ENCODE measurements at regions of chr14 and their contacts with region 1.

Region 1: GRCh38 chr14:75577729-75578101 is 705 bp upstream of the FLVCR2 start:
- DNase-seq: peak; percentile 83 to 93
- H3K4me3 ChIP-seq: peak overlapping the region; percentile 67
- H3K27ac ChIP-seq: peak overlapping the region; percentile 24
- H3K4me1 ChIP-seq: peaks cover 32% of the 10 kb centered on the region
- H3K27me3 ChIP-seq: no peaks in the 10 kb centered on the region
- CTCF ChIP-seq: peak; percentile 97

Region 2: GRCh38 chr14:74881431-74882361 is 696.0 kb before region 1 on chr14 and contains the start of gene DLST:
- CTCF ChIA-PET with region 1: no interaction called
- POLR2A ChIA-PET with region 1: interaction called, 16 read pairs
- intact Hi-C with region 1: no loop called
- DNase-seq: peak; percentile 78 to 99
- H3K4me3 ChIP-seq: peak within 1 kb of the TSS; percentile 75
- H3K27ac ChIP-seq: peak within 1 kb of the TSS; percentile 17
- H3K4me1 ChIP-seq: peaks cover 49% of the 10 kb centered on the region
- H3K27me3 ChIP-seq: no peaks in the 10 kb centered on the region
- CTCF ChIP-seq: no peak
- total RNA-seq, gene DLST: 309 and 320 TPM in 2 replicates

Region 3: GRCh38 chr14:75660630-75661494 is 83.1 kb after region 1 on chr14 and contains the starts of genes ERG28 and TTLL5:
- CTCF ChIA-PET with region 1: interaction called, 15 read pairs
- POLR2A ChIA-PET with region 1: interaction called, 7 read pairs
- intact Hi-C with region 1: no loop called
- DNase-seq: peak; percentile 97 to 99
- H3K4me3 ChIP-seq: peak within 1 kb of the TSS; percentile 99
- H3K27ac ChIP-seq: peak within 1 kb of the TSS; percentile 64
- H3K4me1 ChIP-seq: peaks cover 9% of the 10 kb centered on the region; the same call in 1 of the 2 replicates
- H3K27me3 ChIP-seq: no peaks in the 10 kb centered on the region
- CTCF ChIP-seq: no peak
- total RNA-seq, gene ERG28: 25.2 and 32.5 TPM in 2 replicates
- total RNA-seq, gene TTLL5: 60.3 and 75.3 TPM in 2 replicates

Region 4: GRCh38 chr14:75794615-75795038 is 216.9 kb after region 1 on chr14:
- CTCF ChIA-PET with region 1: interaction called, 5 read pairs
- POLR2A ChIA-PET with region 1: interaction called, 5 read pairs
- intact Hi-C with region 1: loop called (anchors 1 kb)
- DNase-seq: peak in 1 of 2 experiments; percentile 11
- H3K4me3 ChIP-seq: no peak overlapping the region
- H3K27ac ChIP-seq: no peak overlapping the region
- H3K4me1 ChIP-seq: no peaks in the 10 kb centered on the region
- H3K27me3 ChIP-seq: no peaks in the 10 kb centered on the region
- CTCF ChIP-seq: peak; percentile 53

Region 5: GRCh38 chr14:76056128-76056527 is 478.4 kb after region 1 on chr14:
- CTCF ChIA-PET with region 1: interaction called, 5 read pairs
- POLR2A ChIA-PET with region 1: no interaction called
- intact Hi-C with region 1: loop called (anchors 5 kb)
- DNase-seq: no peak
- H3K4me3 ChIP-seq: no peak overlapping the region
- H3K27ac ChIP-seq: no peak overlapping the region
- H3K4me1 ChIP-seq: no peaks in the 10 kb centered on the region
- H3K27me3 ChIP-seq: no peaks in the 10 kb centered on the region
- CTCF ChIP-seq: peak; percentile 64

Region 6: GRCh38 chr14:76203086-76204001 is 625.6 kb after region 1 on chr14:
- CTCF ChIA-PET with region 1: no interaction called
- POLR2A ChIA-PET with region 1: no interaction called
- intact Hi-C with region 1: loop called (anchors 10 kb)
- DNase-seq: peak; percentile 59 to 66
- H3K4me3 ChIP-seq: no peak overlapping the region
- H3K27ac ChIP-seq: peak overlapping the region; percentile 49
- H3K4me1 ChIP-seq: peaks cover 27% of the 10 kb centered on the region
- H3K27me3 ChIP-seq: no peaks in the 10 kb centered on the region
- CTCF ChIP-seq: no peak

Region 7: DNA sequence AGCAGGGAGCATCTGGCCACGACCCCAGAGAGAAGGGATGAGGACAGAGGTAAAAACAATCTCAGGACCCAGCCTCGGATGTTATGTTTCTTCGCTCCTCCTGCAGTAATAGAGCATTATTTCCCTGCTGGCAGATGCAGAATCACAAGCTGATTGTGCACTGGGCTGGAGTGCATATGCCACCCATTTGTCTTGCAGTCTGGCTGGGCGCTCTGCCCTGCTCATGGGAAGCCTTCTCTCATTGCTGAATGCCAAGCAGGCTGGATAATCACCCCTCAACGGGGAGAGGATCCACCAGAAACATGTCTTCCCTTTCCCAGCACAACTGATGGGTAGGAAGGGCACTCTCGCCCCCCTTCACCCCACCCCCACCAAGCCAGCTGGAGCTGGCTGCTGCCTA is 1175.0 kb after region 1 on chr14:
- CTCF ChIA-PET with region 1: no interaction called
- POLR2A ChIA-PET with region 1: no interaction called
- intact Hi-C with region 1: no loop called
- DNase-seq: no peak
- H3K4me3 ChIP-seq: no peak overlapping the region
- H3K27ac ChIP-seq: no peak overlapping the region
- H3K4me1 ChIP-seq: no peaks in the 10 kb centered on the region
- H3K27me3 ChIP-seq: peaks cover 74% of the 10 kb centered on the region
- CTCF ChIP-seq: no peak

Measured in PC-9 (cell line).